Breast epithelium (tissue), 4 donors: ENCODE measurements at regions of chr10 and their contacts with region 1.

Region 1: DNA sequence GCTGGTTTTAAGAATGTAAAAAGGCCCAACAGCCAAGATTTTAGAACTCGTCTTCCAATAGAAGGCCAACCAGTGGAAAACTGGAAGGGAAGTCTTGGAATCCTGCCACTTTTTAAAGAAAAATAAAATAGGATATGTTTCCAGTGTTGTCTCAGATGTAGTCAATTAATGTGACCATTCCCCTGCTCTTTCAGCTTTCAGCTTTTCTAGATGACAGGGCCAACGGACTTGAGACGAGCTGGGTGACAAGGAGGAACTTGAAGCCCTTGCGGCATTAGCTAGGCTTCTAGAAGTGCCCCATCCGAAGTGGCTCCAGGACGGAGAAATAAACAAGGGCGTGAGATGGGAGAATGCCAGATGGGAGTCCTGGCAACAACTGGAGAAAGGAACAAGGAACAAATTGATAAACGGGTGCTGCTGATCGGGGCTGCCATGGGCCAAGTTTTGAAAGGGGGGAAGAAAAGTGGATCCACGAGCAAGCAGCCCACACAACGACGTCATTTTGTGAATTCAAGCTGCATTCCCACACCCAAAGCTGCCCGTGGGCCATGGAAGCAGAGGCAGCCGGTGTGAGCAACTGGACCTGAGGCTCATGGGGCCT is 42.3 kb downstream of the CTBP2 start:
- DNase-seq: peak in 1 of 2 donors; percentile 46
- H3K4me3 ChIP-seq: peak overlapping the region in 1 of 3 donors; percentile 39
- H3K27ac ChIP-seq: peak overlapping the region; percentile 80 to 83
- H3K4me1 ChIP-seq: peaks cover 0 to 48% of the 10 kb centered on the region in 2 donors
- H3K27me3 ChIP-seq: no peaks in the 10 kb centered on the region
- CTCF ChIP-seq: no peak
- POLR2A ChIP-seq: no peak

Region 2: GRCh38 chr10:124837687-124838086 is 280.4 kb before region 1 on chr10:
- intact Hi-C with region 1: loop called (anchors 5 kb)
- DNase-seq: no peak
- H3K4me3 ChIP-seq: no peak overlapping the region
- H3K27ac ChIP-seq: no peak overlapping the region
- H3K4me1 ChIP-seq: no peaks in the 10 kb centered on the region
- H3K27me3 ChIP-seq: no peaks in the 10 kb centered on the region
- CTCF ChIP-seq: no peak
- POLR2A ChIP-seq: no peak

Region 3: GRCh38 chr10:125093199-125093973 is 24.7 kb before region 1 on chr10:
- intact Hi-C with region 1: loop called (anchors 2 kb)
- DNase-seq: no peak
- H3K4me3 ChIP-seq: peak overlapping the region in 1 of 3 donors; percentile 34
- H3K27ac ChIP-seq: peak overlapping the region; percentile 7 to 45
- H3K4me1 ChIP-seq: no peaks in the 10 kb centered on the region
- H3K27me3 ChIP-seq: no peaks in the 10 kb centered on the region
- CTCF ChIP-seq: no peak
- POLR2A ChIP-seq: no peak

Region 4: GRCh38 chr10:125130916-125131315 is 12.8 kb after region 1 on chr10:
- intact Hi-C with region 1: loop called (anchors 1 kb)
- DNase-seq: no peak
- H3K4me3 ChIP-seq: no peak overlapping the region
- H3K27ac ChIP-seq: peak overlapping the region in 1 of 2 donors; percentile 57
- H3K4me1 ChIP-seq: peaks cover 0 to 3% of the 10 kb centered on the region in 2 donors
- H3K27me3 ChIP-seq: no peaks in the 10 kb centered on the region
- CTCF ChIP-seq: no peak
- POLR2A ChIP-seq: no peak